IMR-90 (cell line): ENCODE measurements at regions of chr9 and their contacts with region 1.

Region 1: GRCh38 chr9:76302947-76303940 is 91.0 kb downstream of the RFK start:
- DNase-seq: peak; percentile 72
- ATAC-seq: peak; percentile 79
- H3K4me3 ChIP-seq: no peak overlapping the region
- H3K27ac ChIP-seq: no peak overlapping the region
- H3K4me1 ChIP-seq: peaks cover under 1% of the 10 kb centered on the region; the same call in 1 of the 2 replicates
- H3K27me3 ChIP-seq: no peaks in the 10 kb centered on the region
- CTCF ChIP-seq: peak; percentile 80
- POLR2A ChIP-seq: no peak
- RAD21 ChIP-seq: peak; percentile 94

Region 2: GRCh38 chr9:75265525-75265972 is 1037.7 kb before region 1 on chr9:
- CTCF ChIA-PET with region 1: no interaction called
- POLR2A ChIA-PET with region 1: no interaction called
- dilution Hi-C with region 1: no loop called
- in situ Hi-C with region 1: loop called (anchors 10 kb)
- intact Hi-C with region 1: loop called (anchors 2 kb)
- DNase-seq: peak; percentile 42
- ATAC-seq: peak; percentile 86
- H3K4me3 ChIP-seq: no peak overlapping the region
- H3K27ac ChIP-seq: no peak overlapping the region
- H3K4me1 ChIP-seq: no peaks in the 10 kb centered on the region
- H3K27me3 ChIP-seq: no peaks in the 10 kb centered on the region
- CTCF ChIP-seq: peak; percentile 83
- POLR2A ChIP-seq: no peak
- RAD21 ChIP-seq: peak; percentile 70

Region 3: GRCh38 chr9:75855509-75855908 is 447.7 kb before region 1 on chr9:
- CTCF ChIA-PET with region 1: no interaction called
- POLR2A ChIA-PET with region 1: no interaction called
- dilution Hi-C with region 1: no loop called
- in situ Hi-C with region 1: no loop called
- intact Hi-C with region 1: no loop called
- DNase-seq: peak; percentile 4
- ATAC-seq: 0 out of 2 replicates have a peak, but pooled peaks have one; percentile 27
- H3K4me3 ChIP-seq: no peak overlapping the region
- H3K27ac ChIP-seq: no peak overlapping the region
- H3K4me1 ChIP-seq: no peaks in the 10 kb centered on the region
- H3K27me3 ChIP-seq: no peaks in the 10 kb centered on the region
- CTCF ChIP-seq: peak; percentile 41
- POLR2A ChIP-seq: no peak
- RAD21 ChIP-seq: peak; percentile 29

Region 4: DNA sequence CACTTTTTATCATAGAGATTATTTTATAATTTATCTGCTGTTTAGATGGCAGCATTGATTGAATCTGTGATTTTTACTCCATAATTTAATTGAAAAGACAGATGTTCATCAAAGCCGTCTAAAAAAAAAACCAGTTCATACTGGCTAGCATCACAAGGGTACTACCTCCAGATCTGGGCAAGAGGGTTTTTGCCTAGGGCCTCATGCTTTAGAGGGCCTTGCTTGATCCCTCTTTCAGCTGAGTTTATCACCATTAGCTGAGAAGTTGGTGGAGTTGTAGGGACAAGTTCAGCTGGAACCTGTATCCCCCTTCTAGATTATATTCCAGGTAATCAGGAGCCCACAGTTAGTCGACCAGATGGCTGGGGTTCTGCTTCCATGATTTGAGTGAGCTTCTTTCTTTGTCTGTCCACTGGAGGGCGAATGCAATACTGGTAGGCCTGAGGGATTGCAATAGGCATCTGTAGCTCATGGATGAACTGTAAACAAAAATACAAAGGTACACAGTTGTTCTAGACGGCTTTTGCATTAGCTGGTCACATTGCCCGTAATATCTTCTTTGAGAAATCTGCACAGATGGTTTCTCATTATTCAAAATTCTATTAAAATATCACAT is 324.0 kb before region 1 on chr9:
- CTCF ChIA-PET with region 1: interaction called, 5 read pairs
- POLR2A ChIA-PET with region 1: no interaction called
- dilution Hi-C with region 1: no loop called
- in situ Hi-C with region 1: no loop called
- intact Hi-C with region 1: loop called (anchors 2 kb)
- DNase-seq: peak; percentile 13
- ATAC-seq: peak; percentile 61; the same call in 1 of the 2 replicates
- H3K4me3 ChIP-seq: no peak overlapping the region
- H3K27ac ChIP-seq: no peak overlapping the region
- H3K4me1 ChIP-seq: peaks cover 6% of the 10 kb centered on the region; the same call in 1 of the 2 replicates
- H3K27me3 ChIP-seq: no peaks in the 10 kb centered on the region
- CTCF ChIP-seq: peak; percentile 23; the same call in 1 of the 2 replicates
- POLR2A ChIP-seq: no peak
- RAD21 ChIP-seq: peak; percentile 31; the same call in 1 of the 2 replicates

Region 5: DNA sequence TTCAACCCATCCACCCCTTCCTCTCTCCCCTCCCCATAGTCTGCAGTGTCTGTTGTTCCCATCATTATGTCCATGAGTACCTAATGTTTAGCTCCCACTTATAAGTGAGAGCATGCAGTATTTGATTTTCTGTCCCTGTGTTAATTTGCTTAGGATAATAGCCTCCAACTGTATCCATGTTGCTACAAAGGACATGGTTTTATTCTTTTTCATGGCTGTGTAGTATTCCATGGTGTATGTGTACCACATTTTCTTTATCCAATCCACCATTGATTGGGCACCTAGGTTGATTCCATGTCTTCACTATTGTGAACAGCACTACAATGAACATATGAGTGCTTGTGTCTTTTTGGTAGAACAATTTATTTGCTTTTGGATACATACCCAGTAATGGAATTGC is 225.7 kb before region 1 on chr9:
- CTCF ChIA-PET with region 1: no interaction called
- POLR2A ChIA-PET with region 1: no interaction called
- dilution Hi-C with region 1: no loop called
- in situ Hi-C with region 1: no loop called
- intact Hi-C with region 1: no loop called
- DNase-seq: no peak
- ATAC-seq: no peak
- H3K4me3 ChIP-seq: no peak overlapping the region
- H3K27ac ChIP-seq: no peak overlapping the region
- H3K4me1 ChIP-seq: no peaks in the 10 kb centered on the region
- H3K27me3 ChIP-seq: no peaks in the 10 kb centered on the region
- CTCF ChIP-seq: no peak
- POLR2A ChIP-seq: no peak
- RAD21 ChIP-seq: no peak

Region 6: DNA sequence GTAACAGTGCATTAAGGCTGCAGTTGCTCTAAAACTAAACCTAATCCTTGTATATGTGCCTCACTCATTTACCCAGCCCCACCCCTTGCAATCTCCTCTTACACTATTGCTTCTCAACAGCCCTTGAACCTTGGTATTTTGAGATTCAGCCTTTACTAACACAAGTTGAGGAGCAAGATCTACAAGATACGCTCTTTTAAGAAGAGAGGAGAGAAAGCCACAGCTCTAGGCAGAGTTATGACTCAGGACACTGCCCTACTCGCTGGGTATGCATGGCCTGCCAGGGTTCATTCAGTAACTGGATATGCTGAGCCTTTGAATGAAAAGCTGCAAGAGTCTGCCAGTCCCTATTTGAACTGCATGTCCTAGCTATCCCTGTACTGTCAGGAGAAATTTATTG is 193.3 kb before region 1 on chr9:
- CTCF ChIA-PET with region 1: no interaction called
- POLR2A ChIA-PET with region 1: no interaction called
- dilution Hi-C with region 1: no loop called
- in situ Hi-C with region 1: no loop called
- intact Hi-C with region 1: loop called (anchors 5 kb)
- DNase-seq: peak; percentile 22
- ATAC-seq: peak; percentile 76
- H3K4me3 ChIP-seq: no peak overlapping the region
- H3K27ac ChIP-seq: no peak overlapping the region
- H3K4me1 ChIP-seq: peaks cover 3% of the 10 kb centered on the region
- H3K27me3 ChIP-seq: no peaks in the 10 kb centered on the region
- CTCF ChIP-seq: no peak
- POLR2A ChIP-seq: no peak
- RAD21 ChIP-seq: no peak

Region 7: DNA sequence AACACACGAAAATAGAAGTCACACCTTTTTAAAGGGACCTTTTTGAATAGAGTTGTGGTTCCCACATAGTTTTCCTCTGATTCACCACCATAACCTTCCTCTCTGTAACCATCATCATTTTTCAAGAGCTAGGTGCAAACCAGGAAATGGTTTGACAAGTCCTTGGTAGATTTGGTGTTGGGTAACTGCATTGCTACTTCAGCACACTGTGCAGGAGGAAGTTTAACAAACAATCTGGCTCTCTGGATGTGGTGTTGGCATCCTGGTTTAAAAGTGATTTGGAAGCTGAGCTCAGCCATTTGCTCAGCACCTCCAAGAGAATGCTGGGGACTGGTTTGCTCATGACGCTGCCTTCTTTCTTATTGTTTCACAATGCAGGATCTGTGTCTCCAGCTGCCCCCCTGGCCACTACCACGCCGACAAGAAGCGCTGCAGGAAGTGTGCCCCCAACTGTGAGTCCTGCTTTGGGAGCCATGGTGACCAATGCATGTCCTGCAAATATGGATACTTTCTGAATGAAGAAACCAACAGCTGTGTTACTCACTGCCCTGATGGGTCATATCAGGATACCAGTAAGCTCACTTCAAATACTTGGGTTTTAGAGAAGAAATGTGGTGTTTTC is 122.1 kb before region 1 on chr9:
- CTCF ChIA-PET with region 1: no interaction called
- POLR2A ChIA-PET with region 1: no interaction called
- dilution Hi-C with region 1: no loop called
- in situ Hi-C with region 1: no loop called
- intact Hi-C with region 1: loop called (anchors 5 kb)
- DNase-seq: peak; percentile 74
- ATAC-seq: peak; percentile 76
- H3K4me3 ChIP-seq: no peak overlapping the region
- H3K27ac ChIP-seq: peak overlapping the region; percentile 73
- H3K4me1 ChIP-seq: peaks cover 15% of the 10 kb centered on the region
- H3K27me3 ChIP-seq: no peaks in the 10 kb centered on the region
- CTCF ChIP-seq: no peak
- POLR2A ChIP-seq: no peak
- RAD21 ChIP-seq: no peak

Region 8: GRCh38 chr9:76704593-76705204 is 401.5 kb after region 1 on chr9:
- CTCF ChIA-PET with region 1: no interaction called
- POLR2A ChIA-PET with region 1: no interaction called
- dilution Hi-C with region 1: no loop called
- in situ Hi-C with region 1: no loop called
- intact Hi-C with region 1: loop called (anchors 5 kb)
- DNase-seq: peak; percentile 93
- ATAC-seq: peak; percentile 82
- H3K4me3 ChIP-seq: no peak overlapping the region
- H3K27ac ChIP-seq: no peak overlapping the region
- H3K4me1 ChIP-seq: no peaks in the 10 kb centered on the region
- H3K27me3 ChIP-seq: peaks cover 31% of the 10 kb centered on the region
- CTCF ChIP-seq: peak; percentile 88
- POLR2A ChIP-seq: no peak
- RAD21 ChIP-seq: peak; percentile 95